CD4-positive, alpha-beta memory T cell (primary cell): ENCODE measurements at regions of chr7 and their contacts with region 1.

Region 1: GRCh38 chr7:50229964-50230363 is 74.6 kb upstream of the IKZF1 start:
- DNase-seq: no peak
- H3K4me3 ChIP-seq: no peak overlapping the region
- H3K4me3 Mint-ChIP-seq: no peak overlapping the region
- H3K27ac ChIP-seq: no peak overlapping the region
- H3K27ac Mint-ChIP-seq: no peak overlapping the region
- H3K4me1 ChIP-seq: peaks cover 38% of the 10 kb centered on the region
- H3K4me1 Mint-ChIP-seq: peaks cover 31 to 42% (median 36%) of the 10 kb centered on the region in 4 donors
- H3K27me3 ChIP-seq: no peaks in the 10 kb centered on the region
- H3K27me3 Mint-ChIP-seq: no peaks in the 10 kb centered on the region

Region 2: GRCh38 chr7:50068961-50069551 is 160.9 kb before region 1 on chr7:
- CTCF ChIA-PET with region 1: no interaction called
- POLR2A ChIA-PET with region 1: no interaction called
- intact Hi-C with region 1: no loop called
- DNase-seq: peak; percentile 33 to 48 (median 36)
- H3K4me3 ChIP-seq: peak overlapping the region; percentile 51 to 93
- H3K4me3 Mint-ChIP-seq: peak overlapping the region; percentile 87 to 96 (median 92)
- H3K27ac ChIP-seq: peak overlapping the region; percentile 46
- H3K27ac Mint-ChIP-seq: peak overlapping the region; percentile 64 to 97 (median 92)
- H3K4me1 ChIP-seq: peaks cover 15% of the 10 kb centered on the region
- H3K4me1 Mint-ChIP-seq: peaks cover 17 to 28% (median 22%) of the 10 kb centered on the region in 4 donors
- H3K27me3 ChIP-seq: no peaks in the 10 kb centered on the region
- H3K27me3 Mint-ChIP-seq: peaks cover 0 to 4% of the 10 kb centered on the region in 2 donors

Region 3: DNA sequence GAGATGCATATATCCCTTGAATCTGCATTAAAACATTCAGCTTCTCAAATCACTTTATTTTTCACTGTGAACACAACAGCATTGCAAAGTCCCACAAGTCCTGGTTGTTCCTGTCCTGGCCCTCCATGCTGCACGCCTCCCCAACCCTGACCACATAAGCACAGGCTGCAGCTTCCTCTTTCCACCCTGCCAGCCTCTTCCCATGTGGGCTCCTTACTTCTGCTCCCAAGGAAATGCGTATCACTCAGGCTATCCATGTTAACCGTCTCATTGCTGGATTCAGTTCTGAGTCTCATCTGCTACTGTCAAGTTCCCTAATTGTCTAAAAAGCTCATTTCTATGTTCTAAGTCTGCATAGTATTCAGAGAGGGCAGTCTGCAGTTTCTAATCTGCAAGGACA is 47.2 kb before region 1 on chr7:
- CTCF ChIA-PET with region 1: no interaction called
- POLR2A ChIA-PET with region 1: no interaction called
- intact Hi-C with region 1: no loop called
- DNase-seq: no peak
- H3K4me3 ChIP-seq: no peak overlapping the region
- H3K4me3 Mint-ChIP-seq: no peak overlapping the region
- H3K27ac ChIP-seq: no peak overlapping the region
- H3K27ac Mint-ChIP-seq: no peak overlapping the region
- H3K4me1 ChIP-seq: no peaks in the 10 kb centered on the region
- H3K4me1 Mint-ChIP-seq: no peaks in the 10 kb centered on the region
- H3K27me3 ChIP-seq: no peaks in the 10 kb centered on the region
- H3K27me3 Mint-ChIP-seq: peaks cover 0 to under 1% of the 10 kb centered on the region in 2 donors

Region 4: GRCh38 chr7:50212666-50213621 is 17.0 kb before region 1 on chr7:
- CTCF ChIA-PET with region 1: interaction called, 4 read pairs
- POLR2A ChIA-PET with region 1: interaction called, 38 read pairs
- intact Hi-C with region 1: no loop called
- DNase-seq: peak in 1 of 5 donors; percentile 36
- H3K4me3 ChIP-seq: no peak overlapping the region
- H3K4me3 Mint-ChIP-seq: peak overlapping the region in 7 of 8 donors; percentile 29 to 81 (median 72)
- H3K27ac ChIP-seq: no peak overlapping the region
- H3K27ac Mint-ChIP-seq: peak overlapping the region; percentile 16 to 94 (median 60)
- H3K4me1 ChIP-seq: peaks cover 89% of the 10 kb centered on the region
- H3K4me1 Mint-ChIP-seq: peaks cover 63 to 99% (median 83%) of the 10 kb centered on the region in 4 donors
- H3K27me3 ChIP-seq: no peaks in the 10 kb centered on the region
- H3K27me3 Mint-ChIP-seq: no peaks in the 10 kb centered on the region

Region 5: DNA sequence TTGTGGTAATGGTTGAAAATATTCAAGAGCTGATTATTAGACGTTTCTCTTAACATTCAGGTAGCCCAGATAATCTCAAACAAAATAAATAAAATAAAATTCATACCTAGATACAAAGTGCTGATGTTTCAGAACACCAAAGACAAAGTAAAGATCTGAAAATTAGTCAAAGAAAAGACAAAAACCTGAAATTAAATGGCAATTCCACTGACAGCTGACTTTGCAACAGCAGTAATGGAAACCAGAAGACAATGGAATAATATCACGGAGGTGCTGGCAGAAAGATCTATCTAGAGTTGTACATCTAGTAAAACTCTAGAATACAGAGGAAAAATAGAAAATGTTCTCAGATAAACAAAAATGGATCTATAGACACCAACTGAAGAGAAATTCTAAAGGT is 16.6 kb after region 1 on chr7:
- CTCF ChIA-PET with region 1: interaction called, 6 read pairs
- POLR2A ChIA-PET with region 1: interaction called, 4 read pairs
- intact Hi-C with region 1: loop called (anchors 2 kb)
- DNase-seq: no peak
- H3K4me3 ChIP-seq: no peak overlapping the region
- H3K4me3 Mint-ChIP-seq: peak overlapping the region in 1 of 8 donors; percentile 8
- H3K27ac ChIP-seq: no peak overlapping the region
- H3K27ac Mint-ChIP-seq: peak overlapping the region in 1 of 7 donors; percentile 30
- H3K4me1 ChIP-seq: peaks cover 7% of the 10 kb centered on the region
- H3K4me1 Mint-ChIP-seq: peaks cover 9 to 14% (median 12%) of the 10 kb centered on the region in 4 donors
- H3K27me3 ChIP-seq: no peaks in the 10 kb centered on the region
- H3K27me3 Mint-ChIP-seq: no peaks in the 10 kb centered on the region

Region 6: GRCh38 chr7:50310361-50310760 is 80.4 kb after region 1 on chr7:
- CTCF ChIA-PET with region 1: interaction called, 25 read pairs
- POLR2A ChIA-PET with region 1: interaction called, 63 read pairs
- intact Hi-C with region 1: loop called (anchors 1 kb)
- DNase-seq: no peak
- H3K4me3 ChIP-seq: peak overlapping the region; percentile 86 to 96
- H3K4me3 Mint-ChIP-seq: peak overlapping the region; percentile 97 to 100 (median 100)
- H3K27ac ChIP-seq: peak overlapping the region; percentile 90
- H3K27ac Mint-ChIP-seq: peak overlapping the region in 6 of 7 donors; percentile 93 to 99 (median 98)
- H3K4me1 ChIP-seq: peaks cover 77% of the 10 kb centered on the region
- H3K4me1 Mint-ChIP-seq: peaks cover 42 to 91% (median 55%) of the 10 kb centered on the region in 4 donors
- H3K27me3 ChIP-seq: no peaks in the 10 kb centered on the region
- H3K27me3 Mint-ChIP-seq: no peaks in the 10 kb centered on the region

Region 7: GRCh38 chr7:50317221-50317678 is 87.3 kb after region 1 on chr7:
- CTCF ChIA-PET with region 1: interaction called, 25 read pairs
- POLR2A ChIA-PET with region 1: interaction called, 13 read pairs
- intact Hi-C with region 1: no loop called
- DNase-seq: peak; percentile 78 to 89 (median 84)
- H3K4me3 ChIP-seq: peak overlapping the region in 1 of 2 donors; percentile 53
- H3K4me3 Mint-ChIP-seq: peak overlapping the region; percentile 78 to 100 (median 92)
- H3K27ac ChIP-seq: peak overlapping the region; percentile 90
- H3K27ac Mint-ChIP-seq: peak overlapping the region in 6 of 7 donors; percentile 93 to 99 (median 98)
- H3K4me1 ChIP-seq: peaks cover 99% of the 10 kb centered on the region
- H3K4me1 Mint-ChIP-seq: peaks cover 73 to 100% (median 86%) of the 10 kb centered on the region in 4 donors
- H3K27me3 ChIP-seq: no peaks in the 10 kb centered on the region
- H3K27me3 Mint-ChIP-seq: no peaks in the 10 kb centered on the region

Region 8: GRCh38 chr7:50359995-50360925 is 130.3 kb after region 1 on chr7:
- CTCF ChIA-PET with region 1: no interaction called
- POLR2A ChIA-PET with region 1: interaction called, 12 read pairs
- intact Hi-C with region 1: no loop called
- DNase-seq: peak; percentile 84 to 94 (median 88)
- H3K4me3 ChIP-seq: peak overlapping the region; percentile 1 to 25
- H3K4me3 Mint-ChIP-seq: peak overlapping the region; percentile 70 to 87 (median 78)
- H3K27ac ChIP-seq: peak overlapping the region; percentile 89
- H3K27ac Mint-ChIP-seq: peak overlapping the region in 6 of 7 donors; percentile 98 to 100 (median 99)
- H3K4me1 ChIP-seq: peaks cover 99% of the 10 kb centered on the region
- H3K4me1 Mint-ChIP-seq: peaks cover 87 to 99% (median 95%) of the 10 kb centered on the region in 4 donors
- H3K27me3 ChIP-seq: no peaks in the 10 kb centered on the region
- H3K27me3 Mint-ChIP-seq: no peaks in the 10 kb centered on the region